IMR-90 (cell line): ENCODE measurements at regions of chr11 and their contacts with region 1.

Region 1: DNA sequence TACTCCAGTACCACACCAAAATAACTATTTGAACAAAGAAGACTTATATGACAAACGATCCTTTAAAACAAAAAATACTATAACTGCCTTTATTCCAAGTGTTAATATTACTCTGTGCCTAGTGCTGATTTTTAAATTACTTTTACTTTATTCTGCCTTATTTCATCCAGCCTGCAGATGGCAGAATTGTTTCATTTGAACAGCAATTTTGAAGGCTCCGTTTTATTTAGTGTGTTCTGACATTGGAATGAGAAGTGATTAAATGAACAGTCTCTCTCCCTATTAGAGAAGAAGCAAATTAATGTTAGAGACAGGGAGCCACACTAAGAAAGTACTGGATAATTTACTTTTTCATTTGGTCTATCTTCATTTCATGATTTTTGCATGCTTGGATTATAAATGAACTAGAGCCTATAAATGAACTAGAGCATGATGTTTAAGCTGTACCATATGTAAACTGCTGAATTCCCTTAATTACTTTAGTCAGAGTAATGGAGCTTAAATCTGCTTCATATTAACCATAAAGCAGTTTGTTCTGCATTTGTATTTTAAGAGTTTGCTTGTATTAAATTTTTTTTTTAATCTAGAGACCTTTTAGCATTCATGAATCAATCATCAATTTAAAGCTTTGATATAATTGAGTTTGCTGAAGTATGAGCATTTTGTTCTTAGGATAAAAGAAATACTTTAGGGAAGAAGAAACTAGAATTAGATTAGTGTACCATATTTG is 9.8 kb downstream of the PDHX start:
- DNase-seq: peak; percentile 62
- ATAC-seq: peak; percentile 66
- H3K4me3 ChIP-seq: no peak overlapping the region
- H3K27ac ChIP-seq: peak overlapping the region; percentile 50
- H3K4me1 ChIP-seq: peaks cover 14% of the 10 kb centered on the region
- H3K27me3 ChIP-seq: no peaks in the 10 kb centered on the region
- CTCF ChIP-seq: peak; percentile 83
- POLR2A ChIP-seq: no peak
- RAD21 ChIP-seq: peak; percentile 89

Region 2: DNA sequence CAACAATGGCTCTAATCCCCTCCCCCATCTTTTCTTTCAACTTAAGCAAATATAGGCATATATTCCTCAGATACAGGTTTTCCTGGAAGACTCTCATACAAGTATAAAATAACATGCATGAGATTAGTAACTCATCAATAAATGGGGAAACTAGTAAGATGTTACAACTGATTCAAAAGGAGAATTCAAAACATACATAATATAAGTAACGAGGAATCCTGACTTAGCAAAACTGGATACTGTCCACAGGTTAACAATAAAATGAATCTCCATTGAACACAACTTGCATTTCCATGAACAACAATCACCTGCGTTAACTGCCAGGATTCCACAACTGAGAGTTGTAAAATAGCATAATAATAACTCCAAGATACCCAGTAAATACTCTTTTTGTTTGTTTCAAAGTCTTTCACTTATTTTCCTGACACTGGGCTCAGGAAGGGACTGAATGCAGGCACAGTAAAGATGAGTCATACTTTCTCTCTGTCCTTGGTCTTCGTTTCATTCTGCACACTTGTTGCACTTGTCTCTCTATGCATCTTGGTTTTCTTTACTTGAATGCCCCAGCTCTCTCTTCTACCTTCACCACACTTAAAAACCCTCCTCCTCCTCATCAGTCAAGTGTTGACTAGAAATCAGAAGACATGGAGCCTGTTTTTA is 18.2 kb before region 1 on chr11:
- CTCF ChIA-PET with region 1: no interaction called
- POLR2A ChIA-PET with region 1: no interaction called
- dilution Hi-C with region 1: no loop called
- in situ Hi-C with region 1: no loop called
- intact Hi-C with region 1: no loop called
- DNase-seq: no peak
- ATAC-seq: peak; percentile 54; the same call in 1 of the 2 replicates
- H3K4me3 ChIP-seq: no peak overlapping the region
- H3K27ac ChIP-seq: no peak overlapping the region
- H3K4me1 ChIP-seq: no peaks in the 10 kb centered on the region
- H3K27me3 ChIP-seq: no peaks in the 10 kb centered on the region
- CTCF ChIP-seq: no peak
- POLR2A ChIP-seq: no peak
- RAD21 ChIP-seq: no peak

Region 3: DNA sequence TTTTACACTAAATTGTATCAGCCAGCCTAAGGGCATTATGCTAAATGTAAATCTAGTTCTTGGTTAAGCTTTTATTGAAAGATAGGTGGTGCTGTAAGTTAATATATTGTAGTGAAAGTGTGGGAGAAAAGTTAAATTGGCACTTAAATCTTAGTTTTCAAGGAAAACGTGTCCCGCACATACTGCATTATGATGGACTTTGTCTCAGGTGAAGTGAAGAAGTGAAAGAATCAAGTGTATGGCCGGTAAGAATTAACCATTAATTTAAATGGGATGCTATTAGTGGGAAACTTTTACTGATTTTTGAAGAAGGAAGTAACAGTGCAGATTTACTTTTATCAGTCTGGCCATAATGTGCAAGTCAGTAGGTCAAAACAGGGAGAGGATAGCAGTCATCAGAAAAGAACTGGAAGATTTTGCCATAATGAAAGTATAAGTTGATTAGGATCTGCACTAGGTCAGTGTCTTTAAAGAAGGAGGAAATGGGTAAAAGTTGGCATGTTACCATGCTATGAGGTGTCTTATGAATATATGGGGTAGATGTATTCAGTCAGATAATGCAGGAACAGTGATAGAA is 71.8 kb after region 1 on chr11:
- CTCF ChIA-PET with region 1: interaction called, 7 read pairs
- POLR2A ChIA-PET with region 1: interaction called, 3 read pairs
- dilution Hi-C with region 1: no loop called
- in situ Hi-C with region 1: no loop called
- intact Hi-C with region 1: loop called (anchors 5 kb)
- DNase-seq: peak; percentile 58
- ATAC-seq: peak; percentile 63
- H3K4me3 ChIP-seq: no peak overlapping the region
- H3K27ac ChIP-seq: no peak overlapping the region
- H3K4me1 ChIP-seq: peaks cover 2% of the 10 kb centered on the region
- H3K27me3 ChIP-seq: no peaks in the 10 kb centered on the region
- CTCF ChIP-seq: peak; percentile 63
- POLR2A ChIP-seq: no peak
- RAD21 ChIP-seq: peak; percentile 74

Region 4: DNA sequence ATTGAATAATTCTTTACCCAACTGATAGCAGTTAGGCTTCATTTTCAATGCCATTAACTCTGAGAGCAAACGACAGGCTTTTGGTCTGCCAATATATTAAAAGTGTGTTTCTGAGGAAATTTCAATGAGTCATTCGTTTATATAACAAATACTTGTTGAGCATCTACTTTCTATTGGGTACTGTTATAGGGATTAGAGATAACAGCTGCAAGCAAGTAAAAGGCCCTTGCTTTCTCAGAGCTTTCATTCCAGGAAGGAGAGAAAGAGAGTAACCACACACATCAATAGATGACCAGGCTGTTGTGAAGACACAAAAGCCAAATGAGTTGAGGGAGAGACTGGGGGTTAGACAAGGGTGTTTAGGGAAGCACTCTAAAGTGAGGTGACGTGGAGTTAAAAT is 248.4 kb after region 1 on chr11:
- CTCF ChIA-PET with region 1: no interaction called
- POLR2A ChIA-PET with region 1: no interaction called
- dilution Hi-C with region 1: no loop called
- in situ Hi-C with region 1: no loop called
- intact Hi-C with region 1: loop called (anchors 5 kb)
- DNase-seq: peak; percentile 90
- ATAC-seq: peak; percentile 66
- H3K4me3 ChIP-seq: no peak overlapping the region
- H3K27ac ChIP-seq: peak overlapping the region; percentile 28; the same call in 1 of the 2 replicates
- H3K4me1 ChIP-seq: peaks cover 41% of the 10 kb centered on the region
- H3K27me3 ChIP-seq: no peaks in the 10 kb centered on the region
- CTCF ChIP-seq: no peak
- POLR2A ChIP-seq: 0 out of 2 replicates have a peak, but pooled peaks have one; percentile 20
- RAD21 ChIP-seq: no peak

Region 5: GRCh38 chr11:35214792-35215193 is 288.5 kb after region 1 on chr11:
- CTCF ChIA-PET with region 1: no interaction called
- POLR2A ChIA-PET with region 1: no interaction called
- dilution Hi-C with region 1: no loop called
- in situ Hi-C with region 1: no loop called
- intact Hi-C with region 1: loop called (anchors 5 kb)
- DNase-seq: peak; percentile 97
- ATAC-seq: peak; percentile 47
- H3K4me3 ChIP-seq: no peak overlapping the region
- H3K27ac ChIP-seq: peak overlapping the region; percentile 61
- H3K4me1 ChIP-seq: peaks cover 39% of the 10 kb centered on the region
- H3K27me3 ChIP-seq: no peaks in the 10 kb centered on the region
- CTCF ChIP-seq: no peak
- POLR2A ChIP-seq: no peak
- RAD21 ChIP-seq: peak; percentile 17

Region 6: GRCh38 chr11:35485656-35486322 is 559.5 kb after region 1 on chr11:
- CTCF ChIA-PET with region 1: no interaction called
- POLR2A ChIA-PET with region 1: no interaction called
- dilution Hi-C with region 1: no loop called
- in situ Hi-C with region 1: no loop called
- intact Hi-C with region 1: loop called (anchors 1 kb)
- DNase-seq: peak; percentile 79
- ATAC-seq: peak; percentile 81
- H3K4me3 ChIP-seq: no peak overlapping the region
- H3K27ac ChIP-seq: no peak overlapping the region
- H3K4me1 ChIP-seq: peaks cover 17% of the 10 kb centered on the region
- H3K27me3 ChIP-seq: no peaks in the 10 kb centered on the region
- CTCF ChIP-seq: peak; percentile 90
- POLR2A ChIP-seq: no peak
- RAD21 ChIP-seq: peak; percentile 84